CD4-positive, alpha-beta memory T cell (primary cell): ENCODE measurements at regions of chr6 and their contacts with region 1.

Region 1: GRCh38 chr6:35731736-35732532 is 4.9 kb upstream of the ARMC12 start:
- DNase-seq: peak; percentile 93 to 96 (median 94)
- H3K4me3 ChIP-seq: peak overlapping the region; percentile 30 to 85
- H3K4me3 Mint-ChIP-seq: peak overlapping the region; percentile 83 to 93 (median 88)
- H3K27ac ChIP-seq: peak overlapping the region; percentile 92
- H3K27ac Mint-ChIP-seq: peak overlapping the region; percentile 87 to 99 (median 96)
- H3K4me1 ChIP-seq: peaks cover 89% of the 10 kb centered on the region
- H3K4me1 Mint-ChIP-seq: peaks cover 50 to 92% (median 73%) of the 10 kb centered on the region in 4 donors
- H3K27me3 ChIP-seq: no peaks in the 10 kb centered on the region
- H3K27me3 Mint-ChIP-seq: no peaks in the 10 kb centered on the region

Region 2: DNA sequence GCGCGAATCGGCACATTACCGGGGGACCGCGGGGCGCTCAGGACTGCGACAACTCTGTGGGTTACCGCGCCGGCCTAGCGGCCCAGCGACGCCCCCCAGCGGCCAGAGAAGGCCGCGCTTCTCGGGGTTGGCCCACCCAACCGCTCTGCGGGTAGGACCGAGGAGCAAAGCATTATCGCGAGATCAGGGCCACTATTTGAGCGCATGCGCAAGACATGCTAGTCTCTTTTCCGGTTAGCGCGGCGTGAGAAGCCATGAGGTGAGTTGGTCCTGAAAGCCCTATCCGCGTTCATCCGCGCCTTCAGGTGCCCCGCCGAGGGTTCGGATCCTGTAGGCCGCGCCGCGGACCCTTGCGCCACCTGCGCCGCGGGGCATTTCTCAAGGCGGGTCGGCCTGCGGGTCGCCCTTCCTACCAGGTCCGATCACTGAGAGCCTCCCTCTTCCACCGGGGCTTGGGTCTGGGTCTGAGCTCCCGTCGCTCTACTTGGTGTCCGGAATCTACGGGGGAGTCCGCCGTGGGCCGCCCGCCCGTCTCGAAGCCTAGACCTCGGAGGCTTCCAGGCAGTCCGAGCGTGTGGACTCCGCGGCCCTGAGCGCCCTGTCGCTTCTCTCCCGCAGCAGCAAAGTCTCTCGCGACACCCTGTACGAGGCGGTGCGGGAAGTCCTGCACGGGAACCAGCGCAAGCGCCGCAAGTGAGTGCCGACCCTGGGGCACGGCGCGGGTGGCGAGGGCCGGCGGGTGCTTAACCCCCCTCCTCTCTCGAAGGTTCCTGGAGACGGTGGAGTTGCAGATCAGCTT is 263.6 kb before region 1 on chr6 and contains the start of gene RPL10A:
- CTCF ChIA-PET with region 1: interaction called, 5 read pairs
- POLR2A ChIA-PET with region 1: interaction called, 5 read pairs
- intact Hi-C with region 1: loop called (anchors 2 kb)
- DNase-seq: peak; percentile 94 to 97 (median 96)
- H3K4me3 ChIP-seq: peak within 1 kb of the TSS; percentile 67 to 100
- H3K4me3 Mint-ChIP-seq: peak within 1 kb of the TSS; percentile 94 to 99 (median 98)
- H3K27ac ChIP-seq: peak within 1 kb of the TSS; percentile 74
- H3K27ac Mint-ChIP-seq: peak within 1 kb of the TSS; percentile 93 to 98 (median 98)
- H3K4me1 ChIP-seq: peaks cover 40% of the 10 kb centered on the region
- H3K4me1 Mint-ChIP-seq: peaks cover 29 to 53% (median 40%) of the 10 kb centered on the region in 4 donors
- H3K27me3 ChIP-seq: no peaks in the 10 kb centered on the region
- H3K27me3 Mint-ChIP-seq: no peaks in the 10 kb centered on the region
- total RNA-seq, gene RPL10A: 1,978 to 2,070 TPM

Region 3: DNA sequence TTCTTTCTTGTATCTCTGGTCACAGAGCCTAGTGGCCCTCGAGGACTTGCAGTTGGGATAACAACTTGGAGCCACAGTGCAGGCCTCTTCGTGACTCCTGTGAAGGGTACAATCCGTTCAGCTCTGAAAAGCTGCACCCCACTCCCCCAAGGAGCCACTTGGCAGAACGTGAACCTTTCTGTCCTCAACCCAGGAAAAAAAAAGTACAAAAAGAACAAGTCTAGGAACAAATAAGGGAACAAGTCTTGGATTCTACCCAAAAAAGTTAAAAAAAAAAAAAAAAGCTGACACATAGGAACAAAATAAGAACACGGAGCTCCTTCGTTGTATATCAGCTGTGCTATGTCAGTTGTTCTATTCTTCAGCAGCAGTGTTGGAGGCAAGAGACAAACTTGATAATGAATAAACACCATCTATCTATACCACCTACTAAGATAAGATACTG is 141.3 kb before region 1 on chr6:
- CTCF ChIA-PET with region 1: interaction called, 136 read pairs
- POLR2A ChIA-PET with region 1: interaction called, 20 read pairs
- intact Hi-C with region 1: no loop called
- DNase-seq: no peak
- H3K4me3 ChIP-seq: no peak overlapping the region
- H3K4me3 Mint-ChIP-seq: peak overlapping the region in 2 of 8 donors; percentile 48 to 68
- H3K27ac ChIP-seq: no peak overlapping the region
- H3K27ac Mint-ChIP-seq: peak overlapping the region in 6 of 7 donors; percentile 52 to 90 (median 82)
- H3K4me1 ChIP-seq: peaks cover 86% of the 10 kb centered on the region
- H3K4me1 Mint-ChIP-seq: peaks cover 63 to 90% (median 76%) of the 10 kb centered on the region in 4 donors
- H3K27me3 ChIP-seq: no peaks in the 10 kb centered on the region
- H3K27me3 Mint-ChIP-seq: no peaks in the 10 kb centered on the region

Region 4: DNA sequence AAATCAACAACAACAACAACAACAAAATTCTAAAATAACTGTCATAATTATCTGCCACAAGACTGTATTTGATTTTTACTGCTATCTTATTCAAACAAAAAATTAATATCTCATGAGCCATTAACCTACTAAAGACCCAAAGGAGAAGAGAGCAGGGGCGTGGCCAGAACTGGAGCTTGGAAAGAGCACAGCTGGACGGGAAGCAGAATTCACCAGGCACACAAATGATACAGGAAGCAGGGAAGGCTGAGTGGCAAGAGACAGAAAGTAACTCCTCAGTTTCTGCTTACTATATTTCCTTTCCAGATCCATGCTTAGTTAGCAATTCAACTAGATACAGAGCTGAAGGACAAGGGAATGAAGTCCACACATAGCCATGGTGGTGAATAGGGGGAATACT is 97.6 kb before region 1 on chr6:
- CTCF ChIA-PET with region 1: interaction called, 360 read pairs
- POLR2A ChIA-PET with region 1: no interaction called
- intact Hi-C with region 1: no loop called
- DNase-seq: no peak
- H3K4me3 ChIP-seq: no peak overlapping the region
- H3K4me3 Mint-ChIP-seq: peak overlapping the region in 1 of 8 donors; percentile 14
- H3K27ac ChIP-seq: no peak overlapping the region
- H3K27ac Mint-ChIP-seq: peak overlapping the region; percentile 13 to 89 (median 68)
- H3K4me1 ChIP-seq: peaks cover 37% of the 10 kb centered on the region
- H3K4me1 Mint-ChIP-seq: peaks cover 22 to 57% (median 36%) of the 10 kb centered on the region in 4 donors
- H3K27me3 ChIP-seq: no peaks in the 10 kb centered on the region
- H3K27me3 Mint-ChIP-seq: no peaks in the 10 kb centered on the region

Region 5: DNA sequence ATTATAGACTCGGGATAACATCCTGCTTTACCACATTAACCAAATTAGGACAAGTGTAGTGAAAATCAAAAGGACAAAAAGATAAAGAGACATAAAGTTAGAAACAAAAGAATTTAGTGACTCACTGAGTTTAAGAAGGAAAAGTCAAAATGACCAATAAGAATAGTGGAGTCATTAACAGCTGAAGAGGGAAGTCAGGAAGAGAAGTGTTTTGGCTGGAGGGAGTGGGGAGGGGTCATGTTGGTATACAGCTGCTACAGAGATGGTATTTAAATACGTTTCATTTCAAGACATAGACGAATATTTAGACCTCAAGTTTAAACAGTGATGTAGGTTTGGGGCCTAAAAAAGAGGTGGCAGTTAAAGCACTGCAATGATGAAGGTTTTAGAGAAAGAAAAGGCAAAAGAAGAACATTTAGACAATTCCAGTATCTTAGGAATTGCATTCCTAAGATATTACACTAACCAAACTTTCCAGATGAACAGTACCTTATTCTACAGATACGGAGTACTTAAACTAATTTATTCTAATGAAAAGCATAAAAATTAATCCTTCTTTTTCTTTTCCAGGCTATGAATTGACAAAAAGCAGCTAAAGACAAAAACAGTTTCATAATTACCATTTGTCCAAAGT is 53.8 kb before region 1 on chr6:
- CTCF ChIA-PET with region 1: interaction called, 14 read pairs
- POLR2A ChIA-PET with region 1: interaction called, 141 read pairs
- intact Hi-C with region 1: no loop called
- DNase-seq: no peak
- H3K4me3 ChIP-seq: no peak overlapping the region
- H3K4me3 Mint-ChIP-seq: peak overlapping the region; percentile 22 to 75 (median 43)
- H3K27ac ChIP-seq: no peak overlapping the region
- H3K27ac Mint-ChIP-seq: peak overlapping the region; percentile 39 to 91 (median 81)
- H3K4me1 ChIP-seq: peaks cover 95% of the 10 kb centered on the region
- H3K4me1 Mint-ChIP-seq: peaks cover 67 to 93% (median 79%) of the 10 kb centered on the region in 4 donors
- H3K27me3 ChIP-seq: no peaks in the 10 kb centered on the region
- H3K27me3 Mint-ChIP-seq: no peaks in the 10 kb centered on the region

Region 6: DNA sequence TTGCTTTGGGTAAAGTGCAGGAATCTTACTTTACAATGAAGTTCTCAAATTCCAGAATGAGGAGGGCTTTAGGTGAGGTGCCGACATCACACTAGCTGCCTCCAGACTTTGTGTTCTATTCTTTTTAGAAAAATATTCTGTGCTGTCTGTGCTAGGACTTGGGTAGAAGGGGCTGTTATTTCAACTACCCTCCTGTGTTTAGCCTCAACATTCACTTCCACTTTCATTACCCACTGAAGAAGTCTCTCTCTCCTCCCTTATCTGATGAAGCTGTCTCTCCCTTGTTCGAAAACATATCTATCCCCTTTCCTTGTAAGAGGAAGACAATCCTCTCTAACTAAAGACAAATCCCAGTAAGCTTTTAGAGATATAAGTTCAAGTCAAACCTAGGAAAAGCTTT is 439.6 kb after region 1 on chr6:
- CTCF ChIA-PET with region 1: no interaction called
- POLR2A ChIA-PET with region 1: no interaction called
- intact Hi-C with region 1: no loop called
- DNase-seq: no peak
- H3K4me3 ChIP-seq: no peak overlapping the region
- H3K4me3 Mint-ChIP-seq: no peak overlapping the region
- H3K27ac ChIP-seq: no peak overlapping the region
- H3K27ac Mint-ChIP-seq: peak overlapping the region in 1 of 7 donors; percentile 20
- H3K4me1 ChIP-seq: peaks cover 9% of the 10 kb centered on the region
- H3K4me1 Mint-ChIP-seq: peaks cover 7 to 16% (median 12%) of the 10 kb centered on the region in 4 donors
- H3K27me3 ChIP-seq: no peaks in the 10 kb centered on the region
- H3K27me3 Mint-ChIP-seq: peaks cover 0 to 1% of the 10 kb centered on the region in 2 donors